BJ (cell line): ENCODE measurements at regions of chr13 and their contacts with region 1.

Region 1: GRCh38 chr13:48975856-48976575 is at the start of gene FNDC3A:
- DNase-seq: no peak
- H3K4me3 ChIP-seq: peak within 1 kb of the TSS; percentile 90
- H3K27me3 ChIP-seq: no peaks in the 10 kb centered on the region
- CTCF ChIP-seq: no peak
- polyA plus RNA-seq, gene FNDC3A: 30.7 and 51.8 TPM in 2 replicates

Region 2: DNA sequence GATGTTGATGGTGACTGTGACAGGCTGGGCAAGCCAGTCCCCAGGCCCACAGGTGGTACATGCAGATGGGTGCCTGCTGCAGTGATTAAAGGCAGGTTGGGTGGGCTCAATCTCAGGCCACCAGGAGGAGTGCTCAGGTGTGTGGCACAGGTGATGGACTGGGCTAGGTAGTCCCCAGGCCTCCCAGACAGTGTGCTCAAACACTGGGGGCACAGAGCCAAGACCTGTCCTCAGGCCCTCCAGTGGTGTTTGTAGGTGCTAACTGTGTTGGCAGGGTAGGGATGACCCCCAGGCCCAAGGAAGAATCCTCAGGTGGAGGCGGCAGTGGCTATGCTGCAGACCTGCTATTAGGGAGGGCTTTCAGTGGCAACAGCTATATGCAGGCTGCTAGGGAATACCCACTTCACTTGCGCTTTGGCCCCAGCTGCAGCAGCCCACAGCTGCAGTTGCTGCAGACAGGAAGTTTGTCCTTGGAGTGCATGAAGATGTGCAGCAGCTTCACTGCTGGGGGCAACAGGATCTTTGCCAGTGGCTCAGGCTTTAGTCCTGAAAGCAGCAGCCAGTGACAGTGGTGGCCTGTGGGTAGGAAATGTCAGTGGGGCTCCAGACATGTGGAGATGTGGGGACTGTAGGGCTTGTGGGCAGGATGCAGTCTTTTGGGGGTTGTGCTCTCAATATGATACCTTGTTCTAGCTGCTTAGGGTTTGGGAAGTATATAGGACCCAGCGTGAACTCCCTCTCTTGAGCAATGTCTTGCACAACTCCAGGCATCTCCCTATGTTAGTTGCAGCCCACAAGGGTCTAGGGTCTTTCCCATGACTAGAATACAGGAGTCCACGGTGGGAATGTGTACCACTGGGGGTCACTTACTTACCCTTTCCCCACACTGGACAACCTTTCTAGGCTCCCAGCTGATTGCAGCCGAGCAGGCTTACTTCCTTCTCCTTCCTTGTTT is 190.1 kb after region 1 on chr13:
- CTCF ChIA-PET with region 1: no interaction called
- POLR2A ChIA-PET with region 1: interaction called, 11 read pairs
- DNase-seq: no peak
- H3K4me3 ChIP-seq: no peak overlapping the region
- H3K27me3 ChIP-seq: no peaks in the 10 kb centered on the region
- CTCF ChIP-seq: no peak

Region 3: GRCh38 chr13:49240017-49240416 is 264.0 kb after region 1 on chr13:
- CTCF ChIA-PET with region 1: no interaction called
- POLR2A ChIA-PET with region 1: no interaction called
- DNase-seq: no peak
- H3K4me3 ChIP-seq: no peak overlapping the region
- H3K27me3 ChIP-seq: peaks cover 4% of the 10 kb centered on the region
- CTCF ChIP-seq: peak; percentile 50

Region 4: GRCh38 chr13:50344717-50345116 is 1368.7 kb after region 1 on chr13:
- CTCF ChIA-PET with region 1: no interaction called
- POLR2A ChIA-PET with region 1: interaction called, 17 read pairs
- DNase-seq: no peak
- H3K4me3 ChIP-seq: no peak overlapping the region
- H3K27me3 ChIP-seq: peaks cover 1% of the 10 kb centered on the region; the same call in 1 of the 2 replicates
- CTCF ChIP-seq: no peak